ENCODE measurements at regions of chr20 and their contacts with region 1.

Region 1: GRCh38 chr20:23679133-23680092 is 9.4 kb downstream of the CST4 start:
- DNase-seq: no peak
- H3K4me3 ChIP-seq: no peak overlapping the region
- H3K27ac ChIP-seq: no peak overlapping the region
- H3K4me1 ChIP-seq: no peaks in the 10 kb centered on the region
- H3K27me3 ChIP-seq: no peaks in the 10 kb centered on the region
- CTCF ChIP-seq: no peak
- POLR2A ChIP-seq: no peak

Region 2: DNA sequence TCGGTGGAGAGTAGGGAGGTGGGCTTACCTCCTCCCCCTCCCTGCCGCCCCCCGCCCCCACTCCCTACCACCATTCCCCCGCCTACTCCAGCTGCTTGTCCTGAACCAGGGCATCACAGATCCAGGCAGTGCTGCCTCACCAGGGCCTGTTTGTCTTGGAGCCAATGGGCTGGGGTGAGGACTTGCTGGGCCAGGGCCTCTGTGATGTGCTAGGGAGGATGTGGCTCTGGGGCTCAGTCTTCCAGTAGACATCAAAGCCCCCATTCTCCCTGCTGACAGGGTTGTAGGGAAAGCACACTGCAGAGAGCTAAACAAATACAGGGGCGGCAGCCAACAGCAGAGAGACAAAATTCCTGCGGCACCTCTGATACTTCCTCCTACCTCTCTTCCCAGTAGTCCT is 377.0 kb before region 1 on chr20:
- intact Hi-C with region 1: loop called (anchors 5 kb)
- DNase-seq: peak in 1 of 2 donors; percentile 12
- H3K4me3 ChIP-seq: no peak overlapping the region
- H3K27ac ChIP-seq: no peak overlapping the region
- H3K4me1 ChIP-seq: no peaks in the 10 kb centered on the region
- H3K27me3 ChIP-seq: no peaks in the 10 kb centered on the region
- CTCF ChIP-seq: no peak
- POLR2A ChIP-seq: no peak

Region 3: DNA sequence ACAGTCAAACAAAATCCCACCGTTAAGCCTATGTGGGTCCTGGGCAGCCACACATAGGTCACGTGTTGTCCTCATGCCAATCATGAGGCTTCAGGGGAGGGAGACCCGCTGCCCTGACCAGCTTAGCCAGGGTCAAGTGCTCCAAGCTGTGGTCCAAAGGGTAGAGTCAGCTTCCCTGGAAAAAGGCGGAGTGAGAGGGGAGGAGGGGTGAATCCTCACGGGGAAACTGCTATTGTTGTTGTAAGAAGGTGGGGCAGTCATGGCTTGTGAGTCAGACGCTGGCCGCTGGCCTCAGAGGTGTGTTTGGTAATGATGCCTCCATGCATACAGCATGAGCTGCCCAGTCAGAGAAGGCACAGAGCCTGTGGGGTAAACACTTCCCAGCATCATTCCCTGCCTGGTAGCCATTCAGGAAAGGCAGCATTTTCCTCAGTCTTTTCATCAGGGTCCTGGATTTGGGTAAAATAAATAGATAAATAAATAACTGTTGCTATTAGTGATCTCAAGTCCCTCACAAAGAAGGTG is 50.3 kb before region 1 on chr20:
- intact Hi-C with region 1: loop called (anchors 2 kb)
- DNase-seq: no peak
- H3K4me3 ChIP-seq: no peak overlapping the region
- H3K27ac ChIP-seq: peak overlapping the region; percentile 54 to 83
- H3K4me1 ChIP-seq: peaks cover 0 to under 1% of the 10 kb centered on the region in 2 donors
- H3K27me3 ChIP-seq: no peaks in the 10 kb centered on the region
- CTCF ChIP-seq: no peak
- POLR2A ChIP-seq: no peak

Region 4: DNA sequence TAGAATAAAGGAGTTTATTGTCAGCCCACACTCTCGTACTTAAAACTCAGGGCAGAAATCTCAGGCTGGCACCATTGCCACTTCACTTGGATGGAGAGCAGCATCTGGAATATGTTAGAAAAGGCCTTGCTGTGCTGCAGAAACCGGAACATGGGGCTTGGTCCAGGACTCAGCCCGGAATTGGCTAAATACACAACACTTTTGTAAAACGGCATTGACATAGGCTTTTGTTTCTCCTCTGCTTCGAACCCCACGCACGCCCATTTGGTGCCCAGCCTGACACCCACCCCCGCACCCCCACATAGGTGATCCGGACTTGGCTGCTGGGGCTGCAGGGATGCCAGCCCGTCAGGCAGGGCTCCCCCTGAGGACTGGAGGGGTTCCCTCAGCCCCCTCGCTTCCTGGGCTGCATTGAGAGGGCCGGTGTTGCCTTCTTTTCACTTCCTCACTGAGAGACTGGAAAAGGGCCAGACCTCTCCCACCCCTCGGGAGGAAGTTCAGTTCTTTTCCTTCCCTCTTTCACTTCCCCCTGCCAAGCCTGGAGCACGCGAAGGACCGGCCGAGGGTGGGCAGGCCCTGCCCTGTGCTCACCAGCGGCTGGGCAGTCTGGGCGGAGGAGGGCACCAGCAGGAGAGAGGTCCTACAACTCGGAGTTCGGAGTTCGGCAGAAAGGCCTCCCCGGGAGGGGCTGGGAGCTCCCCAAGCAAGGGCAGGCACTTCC is 23.8 kb before region 1 on chr20:
- intact Hi-C with region 1: no loop called
- DNase-seq: no peak
- H3K4me3 ChIP-seq: peak overlapping the region; percentile 20 to 51 (median 21)
- H3K27ac ChIP-seq: peak overlapping the region; percentile 60 to 82
- H3K4me1 ChIP-seq: peaks cover 0 to 3% of the 10 kb centered on the region in 2 donors
- H3K27me3 ChIP-seq: no peaks in the 10 kb centered on the region
- CTCF ChIP-seq: no peak
- POLR2A ChIP-seq: no peak

Region 5: GRCh38 chr20:23744817-23745216 is 65.4 kb after region 1 on chr20:
- intact Hi-C with region 1: no loop called
- DNase-seq: no peak
- H3K4me3 ChIP-seq: no peak overlapping the region
- H3K27ac ChIP-seq: no peak overlapping the region
- H3K4me1 ChIP-seq: no peaks in the 10 kb centered on the region
- H3K27me3 ChIP-seq: no peaks in the 10 kb centered on the region
- CTCF ChIP-seq: no peak
- POLR2A ChIP-seq: no peak

Measured in breast epithelium (tissue), 4 donors.